ENCODE measurements at regions of chr22 and their contacts with region 1.

Region 1: GRCh38 chr22:41157083-41157482 is 48.0 kb upstream of the L3MBTL2 start:
- DNase-seq: no peak
- ATAC-seq: no peak
- H3K4me3 ChIP-seq: no peak overlapping the region
- H3K27ac ChIP-seq: no peak overlapping the region
- H3K4me1 ChIP-seq: no peaks in the 10 kb centered on the region
- H3K27me3 ChIP-seq: no peaks in the 10 kb centered on the region
- CTCF ChIP-seq: no peak
- POLR2A ChIP-seq: no peak
- RAD21 ChIP-seq: no peak

Region 2: DNA sequence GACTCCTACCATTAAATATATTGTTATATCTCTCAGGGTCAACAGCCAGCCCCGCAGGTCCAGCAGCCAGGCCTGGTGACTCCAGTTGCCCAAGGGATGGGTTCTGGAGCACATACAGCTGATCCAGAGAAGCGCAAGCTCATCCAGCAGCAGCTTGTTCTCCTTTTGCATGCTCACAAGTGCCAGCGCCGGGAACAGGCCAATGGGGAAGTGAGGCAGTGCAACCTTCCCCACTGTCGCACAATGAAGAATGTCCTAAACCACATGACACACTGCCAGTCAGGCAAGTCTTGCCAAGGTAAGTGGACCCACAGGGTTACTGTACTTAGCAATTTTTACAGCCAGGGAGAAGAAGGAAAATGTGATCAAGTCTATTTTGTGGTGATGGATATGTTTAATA is 29.6 kb before region 1 on chr22:
- CTCF ChIA-PET with region 1: no interaction called
- POLR2A ChIA-PET with region 1: no interaction called
- RAD21 ChIA-PET with region 1: no interaction called
- intact Hi-C with region 1: loop called (anchors 2 kb)
- DNase-seq: no peak
- ATAC-seq: no peak
- H3K4me3 ChIP-seq: no peak overlapping the region
- H3K27ac ChIP-seq: no peak overlapping the region
- H3K4me1 ChIP-seq: no peaks in the 10 kb centered on the region
- H3K27me3 ChIP-seq: no peaks in the 10 kb centered on the region
- CTCF ChIP-seq: no peak
- POLR2A ChIP-seq: no peak
- RAD21 ChIP-seq: no peak

Region 3: GRCh38 chr22:41458161-41458728 is 301.2 kb after region 1 on chr22:
- CTCF ChIA-PET with region 1: no interaction called
- POLR2A ChIA-PET with region 1: no interaction called
- RAD21 ChIA-PET with region 1: no interaction called
- intact Hi-C with region 1: no loop called
- DNase-seq: no peak
- ATAC-seq: no peak
- H3K4me3 ChIP-seq: no peak overlapping the region
- H3K27ac ChIP-seq: no peak overlapping the region
- H3K4me1 ChIP-seq: no peaks in the 10 kb centered on the region
- H3K27me3 ChIP-seq: no peaks in the 10 kb centered on the region
- CTCF ChIP-seq: no peak
- POLR2A ChIP-seq: no peak
- RAD21 ChIP-seq: no peak

Measured in HCT116 (cell line).